Mammary epithelial cell (primary cell): ENCODE measurements at regions of chr12 and their contacts with region 1.

Region 1: DNA sequence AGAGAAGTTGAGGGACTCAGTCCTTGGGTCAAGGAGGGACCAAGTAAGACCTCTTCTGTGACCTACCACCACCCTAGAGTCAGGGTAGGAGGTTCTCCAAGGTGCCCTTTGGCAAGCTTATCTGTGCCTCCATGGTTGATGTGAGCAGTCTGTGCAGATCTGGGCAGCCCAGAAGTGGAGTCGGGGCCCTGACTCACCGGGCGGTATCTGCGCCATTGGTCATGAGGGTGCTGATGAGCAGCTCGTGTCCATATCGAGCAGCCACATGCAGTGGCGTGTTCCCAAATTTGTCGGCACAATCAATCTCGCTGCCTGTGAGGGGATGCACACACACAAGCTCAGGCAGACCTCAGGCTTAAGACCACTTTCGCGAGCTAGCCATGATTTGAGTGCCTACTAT is 5.1 kb downstream of the ANKRD52 start:
- DNase-seq: no peak
- H3K4me3 ChIP-seq: no peak overlapping the region
- H3K27ac ChIP-seq: no peak overlapping the region
- H3K4me1 ChIP-seq: peaks cover 13% of the 10 kb centered on the region
- H3K27me3 ChIP-seq: no peaks in the 10 kb centered on the region
- CTCF ChIP-seq: no peak

Region 2: GRCh38 chr12:56104109-56104814 is 148.8 kb before region 1 on chr12 and contains the start of gene PA2G4:
- CTCF ChIA-PET with region 1: no interaction called
- dilution Hi-C with region 1: no loop called
- in situ Hi-C with region 1: no loop called
- intact Hi-C with region 1: no loop called
- DNase-seq: peak; percentile 100
- H3K4me3 ChIP-seq: peak within 1 kb of the TSS; percentile 73 to 89 (median 76)
- H3K27ac ChIP-seq: peak within 1 kb of the TSS; percentile 76
- H3K4me1 ChIP-seq: peaks cover 24% of the 10 kb centered on the region
- H3K27me3 ChIP-seq: no peaks in the 10 kb centered on the region
- CTCF ChIP-seq: no peak
- total RNA-seq, gene PA2G4: 127 to 221 TPM

Region 3: DNA sequence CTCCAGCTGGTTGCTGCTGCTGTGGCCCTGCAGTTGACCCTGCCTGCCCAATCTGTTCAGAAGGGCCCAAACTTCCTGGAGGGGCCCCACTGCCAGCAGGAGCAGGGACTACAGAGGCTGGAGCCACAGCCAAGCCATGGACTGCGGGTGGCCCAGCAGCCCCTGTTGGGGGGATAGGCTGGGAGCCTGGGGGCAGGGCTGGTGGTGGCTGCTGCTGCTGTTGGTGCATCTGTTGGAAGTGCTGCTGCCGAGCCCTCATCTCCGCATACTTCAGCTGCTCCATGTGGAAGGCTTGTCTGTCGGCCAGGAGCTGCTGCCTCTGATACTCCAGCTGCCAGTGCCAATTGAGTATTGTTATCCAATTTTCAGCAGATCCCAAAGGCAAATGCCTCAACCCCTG is 87.7 kb before region 1 on chr12:
- CTCF ChIA-PET with region 1: no interaction called
- dilution Hi-C with region 1: loop called (anchors 5 kb)
- in situ Hi-C with region 1: no loop called
- intact Hi-C with region 1: no loop called
- DNase-seq: no peak
- H3K4me3 ChIP-seq: no peak overlapping the region
- H3K27ac ChIP-seq: no peak overlapping the region
- H3K4me1 ChIP-seq: peaks cover 9% of the 10 kb centered on the region
- H3K27me3 ChIP-seq: no peaks in the 10 kb centered on the region
- CTCF ChIP-seq: no peak

Region 4: DNA sequence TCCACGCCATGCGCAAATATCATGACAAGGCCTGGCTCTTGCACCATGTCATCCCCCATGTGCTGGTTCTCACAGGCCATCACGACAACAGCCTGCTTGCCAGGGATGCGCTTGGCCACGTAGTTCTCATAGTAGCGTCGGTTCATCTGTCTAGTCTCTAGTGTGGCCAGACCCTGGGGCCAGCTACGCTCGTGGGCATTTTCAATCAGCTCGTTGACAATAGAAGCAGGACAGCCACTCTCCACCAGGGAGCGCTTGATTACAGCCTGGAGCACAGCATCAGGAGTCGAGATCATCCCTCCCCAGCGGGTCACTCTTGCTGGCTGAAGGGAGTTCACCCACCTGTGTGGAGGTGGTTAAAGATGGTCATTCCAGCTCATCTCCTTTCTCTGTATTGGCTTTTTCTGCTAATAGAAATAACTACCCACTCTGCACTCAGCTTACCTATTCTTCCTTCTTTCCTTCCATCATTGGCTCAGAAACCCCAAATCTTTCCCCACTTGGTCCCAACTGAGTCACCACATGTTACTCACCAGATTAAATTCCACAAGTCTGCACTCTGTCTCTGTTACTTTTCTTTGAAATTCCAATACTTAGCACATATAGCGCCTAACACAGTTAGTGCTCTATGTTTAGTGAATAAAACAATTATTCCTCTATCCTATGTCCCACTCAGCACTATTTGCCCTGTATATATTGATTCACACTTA is 46.5 kb before region 1 on chr12:
- CTCF ChIA-PET with region 1: no interaction called
- dilution Hi-C with region 1: loop called (anchors 5 kb)
- in situ Hi-C with region 1: no loop called
- intact Hi-C with region 1: no loop called
- DNase-seq: peak; percentile 50
- H3K4me3 ChIP-seq: no peak overlapping the region
- H3K27ac ChIP-seq: no peak overlapping the region
- H3K4me1 ChIP-seq: no peaks in the 10 kb centered on the region
- H3K27me3 ChIP-seq: no peaks in the 10 kb centered on the region
- CTCF ChIP-seq: peak; percentile 71

Region 5: DNA sequence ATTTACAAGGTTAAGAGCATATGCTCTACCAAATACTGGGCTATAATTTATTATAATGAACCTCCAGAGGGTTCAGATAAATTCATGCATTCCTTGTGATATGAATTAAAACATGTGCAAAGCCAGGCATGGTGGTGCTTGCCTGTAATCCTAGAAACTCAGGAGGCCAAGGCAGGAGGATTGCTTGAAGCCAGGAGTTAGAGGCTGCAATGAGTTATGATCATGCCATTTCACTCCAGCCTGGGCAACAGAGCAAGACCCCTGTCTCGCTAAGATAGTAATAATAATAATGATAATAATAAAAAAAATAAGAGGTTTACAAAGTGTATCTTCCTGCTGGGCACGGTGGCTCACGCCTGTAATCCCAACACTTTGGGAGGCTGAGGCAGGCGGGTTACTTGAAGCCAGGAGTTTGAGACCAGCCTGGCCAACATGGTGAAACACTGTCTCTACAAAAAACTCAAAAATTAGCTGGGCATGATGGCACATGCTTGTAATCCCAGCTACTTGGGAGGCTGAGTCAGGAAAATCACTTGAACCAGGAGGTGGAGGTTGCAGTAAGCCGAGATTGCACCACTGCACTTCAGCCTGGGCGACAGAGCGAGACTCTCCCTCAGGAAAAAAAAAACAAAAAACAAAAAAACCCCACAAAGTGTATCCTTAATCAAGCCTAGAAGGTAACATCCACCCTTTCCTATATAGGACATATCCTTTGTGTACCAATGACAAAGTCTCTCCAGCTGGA is 54.3 kb after region 1 on chr12:
- CTCF ChIA-PET with region 1: no interaction called
- dilution Hi-C with region 1: no loop called
- in situ Hi-C with region 1: no loop called
- intact Hi-C with region 1: no loop called
- DNase-seq: no peak
- H3K4me3 ChIP-seq: no peak overlapping the region
- H3K27ac ChIP-seq: no peak overlapping the region
- H3K4me1 ChIP-seq: no peaks in the 10 kb centered on the region
- H3K27me3 ChIP-seq: no peaks in the 10 kb centered on the region
- CTCF ChIP-seq: no peak

Region 6: GRCh38 chr12:56425193-56425592 is 172.1 kb after region 1 on chr12:
- CTCF ChIA-PET with region 1: no interaction called
- dilution Hi-C with region 1: no loop called
- in situ Hi-C with region 1: no loop called
- intact Hi-C with region 1: no loop called
- DNase-seq: no peak
- H3K4me3 ChIP-seq: no peak overlapping the region
- H3K27ac ChIP-seq: no peak overlapping the region
- H3K4me1 ChIP-seq: no peaks in the 10 kb centered on the region
- H3K27me3 ChIP-seq: no peaks in the 10 kb centered on the region
- CTCF ChIP-seq: no peak

Region 7: DNA sequence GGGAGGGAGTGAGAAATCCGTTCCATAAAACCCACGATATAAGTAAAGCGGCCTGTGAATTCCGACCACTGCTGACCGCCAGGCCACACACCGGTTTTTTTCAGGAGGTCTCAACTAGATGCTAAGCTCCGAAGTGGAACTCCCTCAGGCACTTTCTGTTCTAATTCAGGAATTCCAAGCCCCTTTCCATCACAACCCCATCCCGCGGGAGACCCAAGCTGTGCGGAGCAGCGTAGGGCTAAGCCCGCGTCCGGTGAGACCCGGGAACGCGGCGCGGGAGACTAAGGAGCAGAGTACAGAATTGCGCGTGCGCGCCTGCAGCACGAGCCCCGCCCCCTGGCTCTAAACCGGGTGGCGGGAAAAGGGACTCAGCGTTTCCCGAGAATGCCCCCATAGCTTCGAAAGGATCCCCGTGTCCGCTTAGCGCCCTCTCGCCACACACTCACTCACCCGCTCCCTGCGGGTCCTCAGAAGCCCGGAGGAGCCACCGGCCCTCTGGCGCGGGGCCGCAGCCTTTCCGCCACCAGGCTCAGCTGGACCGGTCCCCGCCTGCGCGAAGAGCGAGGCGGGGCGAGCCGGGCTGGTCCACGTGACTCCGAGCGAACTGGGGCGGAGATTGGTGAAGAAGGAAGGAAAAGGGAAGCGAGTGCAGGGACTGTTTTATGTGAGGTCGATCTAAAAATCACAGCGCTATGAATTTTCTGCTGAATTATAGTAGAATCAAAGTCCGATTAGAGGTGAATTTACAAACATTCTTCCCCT is 195.9 kb after region 1 on chr12 and contains the start of gene TIMELESS:
- CTCF ChIA-PET with region 1: no interaction called
- dilution Hi-C with region 1: no loop called
- in situ Hi-C with region 1: no loop called
- intact Hi-C with region 1: no loop called
- DNase-seq: peak; percentile 89
- H3K4me3 ChIP-seq: peak within 1 kb of the TSS; percentile 80 to 95 (median 88)
- H3K27ac ChIP-seq: peak within 1 kb of the TSS; percentile 83
- H3K4me1 ChIP-seq: peaks cover 4% of the 10 kb centered on the region
- H3K27me3 ChIP-seq: no peaks in the 10 kb centered on the region
- CTCF ChIP-seq: peak in 1 of 2 donors; percentile 4
- total RNA-seq, gene TIMELESS: 4.5 to 21.7 TPM